PC-9 (cell line): ENCODE measurements at regions of chrX and their contacts with region 1.

Region 1: DNA sequence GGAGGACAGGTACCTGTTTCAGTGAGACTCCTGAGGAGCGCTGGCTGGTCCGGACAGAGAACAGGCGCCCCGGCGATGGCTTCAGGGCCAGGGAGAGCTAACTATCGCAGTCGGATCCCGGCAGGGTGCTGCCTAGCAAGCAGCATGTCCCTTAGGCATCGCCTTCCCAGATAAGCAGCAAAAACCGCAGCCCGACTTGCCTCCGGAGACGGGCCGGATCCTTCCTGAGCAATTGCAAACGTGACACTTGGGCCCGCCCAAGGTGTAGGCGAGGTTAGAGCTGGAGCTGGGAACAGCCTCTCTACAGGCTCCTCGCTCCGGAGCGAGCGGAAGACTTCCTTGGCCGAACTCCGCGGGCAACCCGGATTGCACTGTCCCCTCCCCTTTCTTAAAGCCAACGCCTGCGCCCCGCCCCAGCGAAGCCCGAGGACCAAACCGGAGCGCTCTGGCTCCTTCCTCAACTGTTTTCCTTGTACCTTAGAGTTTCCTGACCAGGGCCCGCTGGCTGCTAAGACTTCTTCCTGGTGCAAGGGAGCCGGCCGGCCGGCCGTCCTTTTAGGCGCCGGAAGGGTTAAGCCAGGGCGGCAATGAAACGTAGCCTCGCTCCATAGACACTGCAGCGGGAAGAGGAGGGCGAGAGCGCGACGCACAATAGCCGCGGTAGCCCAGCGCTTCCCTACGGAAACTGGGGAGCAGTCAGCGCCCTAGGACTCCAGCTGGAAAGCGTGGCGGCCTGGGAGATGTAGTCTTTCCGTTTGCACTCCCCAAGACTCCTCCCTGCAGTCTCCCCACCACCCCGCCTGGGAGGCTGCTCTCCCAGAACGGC is at the start of gene OPHN1:
- DNase-seq: peak; percentile 80 to 83
- H3K4me3 ChIP-seq: peak within 1 kb of the TSS; percentile 61
- H3K27ac ChIP-seq: peak within 1 kb of the TSS; percentile 58
- H3K4me1 ChIP-seq: peaks cover 38% of the 10 kb centered on the region
- H3K27me3 ChIP-seq: no peaks in the 10 kb centered on the region
- CTCF ChIP-seq: no peak
- total RNA-seq, gene OPHN1: 9.3 and 11.6 TPM in 2 replicates

Region 2: DNA sequence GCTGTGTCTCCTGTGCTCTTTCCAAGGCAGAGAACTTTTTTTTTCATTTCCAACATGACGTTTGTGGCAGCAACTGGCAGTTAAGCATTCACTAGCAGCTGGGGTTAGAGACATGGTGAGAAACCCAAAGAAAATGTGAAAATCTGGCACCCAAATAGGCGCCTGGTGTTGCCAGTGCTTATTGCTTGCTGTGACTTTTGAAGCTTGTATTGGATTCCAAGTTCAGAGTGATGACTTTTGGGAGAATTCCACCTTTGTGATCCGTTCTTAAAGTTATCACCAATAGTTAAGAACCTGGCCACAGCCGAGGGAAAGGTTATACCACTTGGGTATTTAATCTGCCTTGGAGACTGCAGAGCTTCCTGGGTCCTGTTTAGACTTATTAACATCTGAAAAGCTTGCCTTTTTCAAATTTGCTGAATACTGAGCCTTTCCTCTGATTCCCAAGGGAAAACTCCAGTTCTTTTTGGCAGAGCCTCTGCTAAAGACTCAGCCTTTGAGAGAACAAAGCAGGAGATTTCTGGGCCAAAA is 101.1 kb before region 1 on chrX:
- CTCF ChIA-PET with region 1: no interaction called
- POLR2A ChIA-PET with region 1: interaction called, 10 read pairs
- intact Hi-C with region 1: no loop called
- DNase-seq: no peak
- H3K4me3 ChIP-seq: no peak overlapping the region
- H3K27ac ChIP-seq: no peak overlapping the region
- H3K4me1 ChIP-seq: no peaks in the 10 kb centered on the region
- H3K27me3 ChIP-seq: no peaks in the 10 kb centered on the region
- CTCF ChIP-seq: no peak

Region 3: GRCh38 chrX:68498508-68499379 is 65.4 kb after region 1 on chrX and contains the start of gene YIPF6:
- CTCF ChIA-PET with region 1: no interaction called
- POLR2A ChIA-PET with region 1: interaction called, 11 read pairs
- intact Hi-C with region 1: loop called (anchors 5 kb)
- DNase-seq: peak; percentile 61 to 69
- H3K4me3 ChIP-seq: peak within 1 kb of the TSS; percentile 98
- H3K27ac ChIP-seq: peak within 1 kb of the TSS; percentile 87
- H3K4me1 ChIP-seq: peaks cover 15% of the 10 kb centered on the region; the same call in 1 of the 2 replicates
- H3K27me3 ChIP-seq: no peaks in the 10 kb centered on the region
- CTCF ChIP-seq: no peak; the same call in 1 of the 2 replicates
- total RNA-seq, gene YIPF6: 46.1 and 49.1 TPM in 2 replicates

Region 4: GRCh38 chrX:68894513-68895340 is 461.4 kb after region 1 on chrX:
- CTCF ChIA-PET with region 1: no interaction called
- POLR2A ChIA-PET with region 1: no interaction called
- intact Hi-C with region 1: no loop called
- DNase-seq: peak in 1 of 2 experiments; percentile 34
- H3K4me3 ChIP-seq: no peak overlapping the region
- H3K27ac ChIP-seq: no peak overlapping the region
- H3K4me1 ChIP-seq: peaks cover 7% of the 10 kb centered on the region
- H3K27me3 ChIP-seq: peaks cover 5% of the 10 kb centered on the region; the same call in 1 of the 2 replicates
- CTCF ChIP-seq: no peak